ENCODE measurements at regions of chr13 and their contacts with region 1.

Region 1: GRCh38 chr13:59706101-59706976 is 457.4 kb downstream of the DIAPH3 start:
- DNase-seq: no peak
- H3K4me3 ChIP-seq: no peak overlapping the region
- H3K27ac ChIP-seq: no peak overlapping the region
- H3K4me1 ChIP-seq: no peaks in the 10 kb centered on the region
- H3K27me3 ChIP-seq: no peaks in the 10 kb centered on the region
- CTCF ChIP-seq: no peak
- POLR2A ChIP-seq: no peak

Region 2: DNA sequence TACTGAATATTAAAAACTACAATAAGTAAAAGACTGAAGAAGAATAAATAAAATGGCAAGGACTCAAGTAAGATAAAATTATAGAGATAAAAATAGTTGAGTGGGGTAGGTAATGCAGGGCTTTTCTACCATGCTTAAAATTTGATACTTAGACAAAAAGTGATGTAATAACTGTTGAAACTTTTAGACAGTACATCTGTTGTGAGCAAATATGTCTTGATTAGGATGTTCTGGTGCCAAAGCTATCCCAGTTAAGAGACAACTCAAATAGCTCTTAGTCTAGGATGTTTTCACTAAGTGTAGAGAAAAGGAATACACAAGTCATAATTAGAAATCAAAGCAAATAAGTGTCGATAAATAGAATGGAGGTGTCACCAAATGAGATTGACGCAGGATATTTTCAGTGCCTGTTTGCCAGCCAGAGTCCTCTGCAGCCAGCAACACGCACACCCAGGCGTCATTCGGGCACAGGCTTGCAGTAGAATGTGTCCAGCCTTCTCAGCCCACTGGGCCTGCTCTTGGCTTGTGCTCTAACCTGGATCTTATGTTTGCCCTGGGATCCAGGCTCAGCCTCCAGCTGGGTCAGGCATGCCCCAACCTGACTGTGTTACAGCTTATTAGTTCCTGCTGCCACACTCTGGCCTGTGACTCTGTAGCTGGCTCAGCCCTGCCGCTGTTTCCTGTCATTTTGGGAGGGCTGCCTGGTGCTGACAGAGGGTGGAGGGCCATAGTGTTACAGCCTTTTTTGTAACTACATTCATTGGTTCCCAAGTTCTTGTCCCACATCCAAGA is 1308.5 kb before region 1 on chr13:
- intact Hi-C with region 1: loop called (anchors 10 kb)
- DNase-seq: no peak
- H3K4me3 ChIP-seq: no peak overlapping the region
- H3K27ac ChIP-seq: no peak overlapping the region
- H3K4me1 ChIP-seq: no peaks in the 10 kb centered on the region
- H3K27me3 ChIP-seq: no peaks in the 10 kb centered on the region
- CTCF ChIP-seq: no peak
- POLR2A ChIP-seq: no peak